Naive thymus-derived CD4-positive, alpha-beta T cell (primary cell): ENCODE measurements at regions of chr15 and their contacts with region 1.

Region 1: GRCh38 chr15:85840065-85840801 is 45.5 kb upstream of the KLHL25 start:
- DNase-seq: peak; percentile 55 to 87 (median 75)
- ATAC-seq: peak; percentile 95
- H3K4me3 ChIP-seq: peak overlapping the region; percentile 36
- H3K4me3 Mint-ChIP-seq: peak overlapping the region; percentile 34 to 82 (median 71)
- H3K27ac ChIP-seq: no peak overlapping the region
- H3K27ac Mint-ChIP-seq: peak overlapping the region in 1 of 9 donors; percentile 36
- H3K4me1 ChIP-seq: peaks cover 0 to 3% of the 10 kb centered on the region in 2 donors
- H3K4me1 Mint-ChIP-seq: peaks cover 2 to 9% (median 6%) of the 10 kb centered on the region in 7 donors
- H3K27me3 ChIP-seq: no peaks in the 10 kb centered on the region
- H3K27me3 Mint-ChIP-seq: peaks cover 0 to 9% (median 6%) of the 10 kb centered on the region in 5 donors

Region 2: GRCh38 chr15:85618956-85619491 is 221.2 kb before region 1 on chr15:
- CTCF ChIA-PET with region 1: no interaction called
- POLR2A ChIA-PET with region 1: no interaction called
- intact Hi-C with region 1: loop called (anchors 1 to 10 kb)
- DNase-seq: peak in 6 of 9 donors; percentile 13 to 68 (median 24)
- ATAC-seq: peak; percentile 77
- H3K4me3 ChIP-seq: peak overlapping the region; percentile 3
- H3K4me3 Mint-ChIP-seq: no peak overlapping the region
- H3K27ac ChIP-seq: peak overlapping the region; percentile 6
- H3K27ac Mint-ChIP-seq: no peak overlapping the region
- H3K4me1 ChIP-seq: peaks cover 29 to 38% of the 10 kb centered on the region in 2 donors
- H3K4me1 Mint-ChIP-seq: peaks cover 14 to 41% (median 26%) of the 10 kb centered on the region in 7 donors
- H3K27me3 ChIP-seq: no peaks in the 10 kb centered on the region
- H3K27me3 Mint-ChIP-seq: no peaks in the 10 kb centered on the region

Region 3: DNA sequence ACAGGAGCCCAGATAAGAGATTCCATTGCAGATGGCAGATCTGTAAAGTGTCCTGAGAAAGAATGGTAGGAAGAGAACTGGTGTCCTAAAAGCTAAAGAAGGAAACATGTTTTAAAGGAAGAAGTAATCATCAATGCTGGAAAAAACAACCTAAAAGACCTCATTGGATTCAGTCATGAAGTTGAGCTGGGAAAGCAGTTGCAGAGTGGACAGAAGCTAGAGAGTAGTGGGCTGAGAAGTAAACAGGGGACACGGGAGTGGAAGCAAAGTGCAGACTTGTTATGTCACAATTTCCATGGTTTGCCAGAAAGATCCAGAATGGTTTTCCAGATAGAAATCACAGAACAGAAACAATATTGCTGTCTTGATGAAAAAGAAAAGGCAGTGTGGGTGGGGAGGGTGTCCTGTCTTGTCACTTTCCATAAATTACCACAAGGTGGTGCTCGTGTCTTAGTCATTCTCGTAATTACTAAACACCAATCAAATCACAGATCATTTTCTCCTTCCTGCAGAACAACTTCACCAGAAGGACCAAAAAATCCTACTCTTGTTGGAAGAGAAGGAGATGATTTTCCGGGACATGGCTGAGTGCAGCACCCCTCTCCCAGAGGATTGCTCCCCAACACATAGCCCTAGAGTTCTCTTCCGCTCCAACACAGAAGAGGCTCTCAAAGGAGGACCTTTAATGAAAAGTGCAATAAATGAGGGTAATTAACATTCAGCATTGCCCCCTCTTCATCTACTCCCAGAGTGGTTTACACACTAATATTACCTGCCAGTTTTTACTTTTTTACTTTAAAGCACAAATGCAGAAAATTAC is 110.0 kb before region 1 on chr15:
- CTCF ChIA-PET with region 1: interaction called, 74 read pairs
- POLR2A ChIA-PET with region 1: interaction called, 3 read pairs
- intact Hi-C with region 1: loop called (anchors 1 kb)
- DNase-seq: peak in 7 of 9 donors; percentile 48 to 72 (median 62)
- ATAC-seq: peak; percentile 90
- H3K4me3 ChIP-seq: no peak overlapping the region
- H3K4me3 Mint-ChIP-seq: no peak overlapping the region
- H3K27ac ChIP-seq: no peak overlapping the region
- H3K27ac Mint-ChIP-seq: peak overlapping the region; percentile 7 to 88 (median 47)
- H3K4me1 ChIP-seq: no peaks in the 10 kb centered on the region
- H3K4me1 Mint-ChIP-seq: peaks cover 0 to 28% (median 14%) of the 10 kb centered on the region in 7 donors
- H3K27me3 ChIP-seq: no peaks in the 10 kb centered on the region
- H3K27me3 Mint-ChIP-seq: no peaks in the 10 kb centered on the region

Region 4: GRCh38 chr15:85760531-85761371 is 79.5 kb before region 1 on chr15:
- CTCF ChIA-PET with region 1: interaction called, 3 read pairs
- POLR2A ChIA-PET with region 1: interaction called, 4 read pairs
- intact Hi-C with region 1: loop called (anchors 1 kb)
- DNase-seq: no peak
- ATAC-seq: no peak
- H3K4me3 ChIP-seq: no peak overlapping the region
- H3K4me3 Mint-ChIP-seq: no peak overlapping the region
- H3K27ac ChIP-seq: no peak overlapping the region
- H3K27ac Mint-ChIP-seq: no peak overlapping the region
- H3K4me1 ChIP-seq: no peaks in the 10 kb centered on the region
- H3K4me1 Mint-ChIP-seq: peaks cover 0 to 6% (median 3%) of the 10 kb centered on the region in 7 donors
- H3K27me3 ChIP-seq: no peaks in the 10 kb centered on the region
- H3K27me3 Mint-ChIP-seq: no peaks in the 10 kb centered on the region

Region 5: DNA sequence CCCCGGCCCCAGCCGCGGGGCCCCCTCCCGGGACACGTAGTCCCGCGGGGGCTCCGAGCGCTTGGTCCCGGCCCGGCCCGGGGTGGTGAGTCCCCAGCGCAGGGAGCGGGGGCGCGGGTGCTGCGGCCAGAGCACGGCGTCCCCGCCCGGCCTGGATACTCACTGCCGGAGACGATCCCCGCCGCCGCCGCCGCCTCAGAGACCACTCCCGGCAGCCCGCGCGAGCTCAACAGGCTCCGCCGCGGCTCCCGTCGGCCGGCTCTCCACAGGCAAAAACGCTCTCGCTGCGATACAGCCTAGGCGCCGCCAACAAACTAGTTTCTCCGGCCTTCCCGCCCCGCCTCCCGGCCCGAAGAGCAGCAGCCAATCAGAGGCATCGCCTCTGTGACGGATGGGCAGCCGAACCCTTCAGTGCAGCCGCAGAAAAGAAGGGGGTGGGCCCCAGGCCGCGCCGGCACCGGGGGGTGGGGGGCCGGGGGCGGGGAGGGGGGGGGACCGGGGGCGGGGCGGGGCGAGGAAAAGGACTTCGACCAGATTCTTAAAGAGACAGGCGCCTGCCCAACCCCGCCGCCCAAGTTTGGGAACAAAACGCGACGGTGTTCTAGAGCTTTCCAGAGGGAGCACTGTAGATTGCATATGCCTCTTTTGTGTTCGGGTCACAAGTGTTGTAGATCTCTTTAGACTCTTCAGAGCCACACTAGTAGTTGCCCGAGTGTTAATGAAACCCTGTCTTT is 45.5 kb before region 1 on chr15 and contains the start of gene KLHL25:
- CTCF ChIA-PET with region 1: no interaction called
- POLR2A ChIA-PET with region 1: interaction called, 3 read pairs
- intact Hi-C with region 1: loop called (anchors 1 kb)
- DNase-seq: peak; percentile 77 to 93 (median 91)
- ATAC-seq: peak; percentile 99
- H3K4me3 ChIP-seq: peak within 1 kb of the TSS; percentile 66
- H3K4me3 Mint-ChIP-seq: peak within 1 kb of the TSS; percentile 85 to 96 (median 94)
- H3K27ac ChIP-seq: peak within 1 kb of the TSS; percentile 84
- H3K27ac Mint-ChIP-seq: peak within 1 kb of the TSS; percentile 77 to 91 (median 86)
- H3K4me1 ChIP-seq: peaks cover 22 to 28% of the 10 kb centered on the region in 2 donors
- H3K4me1 Mint-ChIP-seq: peaks cover 26 to 49% (median 44%) of the 10 kb centered on the region in 7 donors
- H3K27me3 ChIP-seq: no peaks in the 10 kb centered on the region
- H3K27me3 Mint-ChIP-seq: peaks cover 0 to 3% (median 0%) of the 10 kb centered on the region in 5 donors
- total RNA-seq, gene KLHL25: 5.5 to 13.1 (median 10.6) TPM